GM10248 (cell line): ENCODE measurements at regions of chr7 and their contacts with region 1.

Region 1: DNA sequence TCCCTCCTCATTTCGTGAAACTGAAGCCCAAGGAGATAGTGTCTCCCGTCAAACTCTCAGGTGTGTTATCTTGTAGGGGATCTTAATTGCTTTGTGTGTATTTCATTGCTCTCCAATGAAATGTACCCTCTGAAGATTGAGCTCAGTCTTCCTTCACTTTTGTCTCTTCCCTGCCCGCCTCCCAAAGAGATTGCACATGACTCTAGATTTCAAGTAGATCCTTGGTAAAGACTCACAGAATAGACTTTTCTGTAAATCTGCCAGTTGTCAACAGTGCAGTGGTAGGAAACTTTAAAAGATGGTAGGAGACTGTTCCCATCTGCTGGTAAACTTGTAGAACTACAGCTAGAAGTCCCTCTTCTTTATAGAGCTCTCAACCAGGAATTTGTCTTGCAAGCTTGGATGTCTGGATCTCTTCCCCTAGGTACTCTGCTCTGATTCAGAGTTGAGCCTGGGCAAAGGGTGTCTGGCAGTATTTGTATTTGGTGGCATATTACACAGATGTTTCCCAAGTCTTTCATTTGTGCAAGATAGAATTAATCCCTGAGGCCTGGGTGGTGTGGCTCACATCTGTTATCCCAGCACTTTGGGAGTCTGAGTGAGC is 9.6 kb downstream of the CCL26 start:
- DNase-seq: peak; percentile 80
- CTCF ChIP-seq: peak; percentile 72

Region 2: DNA sequence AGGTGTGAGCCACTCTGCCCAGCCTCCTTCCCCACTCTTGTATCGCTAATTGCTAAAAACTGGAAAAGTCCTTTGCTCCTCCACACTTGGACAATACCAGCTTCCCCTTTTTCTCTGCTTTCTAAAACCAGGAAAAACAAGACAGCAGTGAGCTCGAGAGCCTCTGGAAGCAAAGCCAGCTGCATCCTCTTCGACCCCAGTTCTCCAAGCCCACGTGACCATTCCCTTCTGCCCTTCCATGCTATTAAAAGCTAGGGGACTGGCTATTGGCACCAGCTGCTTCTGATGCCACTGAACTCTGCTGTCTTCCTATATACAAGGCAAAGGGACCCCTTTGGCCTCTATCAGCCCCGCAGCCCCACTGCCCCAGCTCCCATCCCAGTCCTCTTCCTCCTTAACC is 178.1 kb before region 1 on chr7:
- CTCF ChIA-PET with region 1: no interaction called
- POLR2A ChIA-PET with region 1: no interaction called
- DNase-seq: no peak
- CTCF ChIP-seq: no peak

Region 3: GRCh38 chr7:75696263-75697037 is 66.0 kb before region 1 on chr7:
- CTCF ChIA-PET with region 1: no interaction called
- POLR2A ChIA-PET with region 1: no interaction called
- DNase-seq: no peak
- CTCF ChIP-seq: no peak

Region 4: GRCh38 chr7:75738987-75739795 is 23.2 kb before region 1 on chr7:
- CTCF ChIA-PET with region 1: interaction called, 14 read pairs
- POLR2A ChIA-PET with region 1: no interaction called
- DNase-seq: peak; percentile 100
- CTCF ChIP-seq: no peak

Region 5: GRCh38 chr7:75951511-75951917 is 189.1 kb after region 1 on chr7:
- CTCF ChIA-PET with region 1: no interaction called
- POLR2A ChIA-PET with region 1: no interaction called
- DNase-seq: no peak
- CTCF ChIP-seq: no peak